ENCODE measurements at regions of chr2 and their contacts with region 1.

Region 1: DNA sequence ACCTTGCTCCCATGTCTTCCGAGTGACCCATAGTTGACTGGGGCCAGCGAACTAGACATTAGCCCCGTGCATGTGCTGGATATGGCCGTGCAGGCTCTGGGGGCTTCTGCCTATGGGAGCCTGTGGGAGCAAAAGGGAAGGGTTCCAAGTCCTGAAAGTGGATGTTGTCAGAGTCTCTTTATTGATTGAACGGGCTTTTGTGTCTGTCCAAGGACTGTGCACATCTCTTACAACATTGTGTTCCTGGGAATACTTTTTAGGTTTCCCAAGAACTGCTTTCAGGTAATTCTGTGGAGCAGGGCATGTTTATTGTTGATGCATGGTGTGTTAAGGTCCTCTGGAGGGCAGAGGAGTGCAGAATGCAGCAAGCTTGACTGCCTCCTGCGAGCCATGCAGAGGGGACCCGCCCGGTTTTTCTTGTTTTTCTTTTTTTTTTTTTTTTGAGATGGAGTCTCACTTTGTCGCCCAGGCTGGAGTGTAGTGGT is 5.0 kb downstream of the RNF144A start:
- DNase-seq: peak; percentile 47
- H3K4me3 ChIP-seq: no peak overlapping the region
- H3K27ac ChIP-seq: no peak overlapping the region
- H3K4me1 ChIP-seq: peaks cover 6 to 76% of the 10 kb centered on the region in 2 experiments; a peak in 3 of 4 replicates
- H3K27me3 ChIP-seq: no peaks in the 10 kb centered on the region
- CTCF ChIP-seq: peak; percentile 21
- EP300 ChIP-seq: no peak
- RAD21 ChIP-seq: peak; percentile 62

Region 2: DNA sequence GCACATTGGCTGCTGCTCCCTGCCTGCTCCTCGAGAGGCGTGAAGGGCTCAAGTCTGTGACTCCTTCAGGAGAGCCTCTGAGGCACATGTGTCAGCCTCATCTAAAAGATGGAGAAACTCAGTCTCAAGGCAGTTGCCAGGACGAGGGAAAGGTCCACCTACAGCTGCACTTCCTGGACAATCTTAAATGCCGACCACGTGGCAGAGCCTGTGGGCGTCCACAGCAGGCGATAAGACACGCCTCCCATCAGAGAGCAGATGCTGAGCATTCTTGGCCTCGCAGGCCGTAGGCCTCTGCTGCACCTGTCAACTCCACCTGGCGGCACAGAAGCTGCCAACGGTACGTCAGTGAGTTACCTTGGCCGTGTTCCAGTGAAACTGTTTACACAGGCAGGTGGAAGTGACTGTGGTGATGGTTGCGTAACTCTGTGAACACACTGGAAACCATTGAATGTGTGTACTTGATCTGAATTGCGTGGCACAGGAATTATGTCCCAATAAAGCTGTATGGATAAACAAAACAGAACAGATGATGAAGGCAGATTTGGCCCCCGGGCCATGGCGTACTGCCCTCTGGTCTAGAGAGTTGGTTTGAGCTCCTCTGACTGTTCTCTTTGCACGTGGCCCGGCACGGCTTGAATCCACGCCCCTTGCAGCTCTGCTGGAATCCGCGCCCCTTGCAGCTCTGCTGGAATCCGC is 109.5 kb after region 1 on chr2:
- CTCF ChIA-PET with region 1: interaction called, 80 read pairs
- POLR2A ChIA-PET with region 1: interaction called, 6 read pairs
- DNase-seq: no peak
- H3K4me3 ChIP-seq: no peak overlapping the region
- H3K27ac ChIP-seq: no peak overlapping the region
- H3K4me1 ChIP-seq: peaks cover 0 to 22% of the 10 kb centered on the region in 2 experiments; a peak in 1 of 4 replicates
- H3K27me3 ChIP-seq: no peaks in the 10 kb centered on the region
- CTCF ChIP-seq: no peak
- EP300 ChIP-seq: no peak
- RAD21 ChIP-seq: no peak

Region 3: GRCh38 chr2:7363906-7364305 is 441.7 kb after region 1 on chr2:
- CTCF ChIA-PET with region 1: no interaction called
- POLR2A ChIA-PET with region 1: no interaction called
- DNase-seq: no peak
- H3K4me3 ChIP-seq: no peak overlapping the region
- H3K27ac ChIP-seq: no peak overlapping the region
- H3K4me1 ChIP-seq: no peaks in the 10 kb centered on the region
- H3K27me3 ChIP-seq: no peaks in the 10 kb centered on the region
- CTCF ChIP-seq: peak; percentile 41
- EP300 ChIP-seq: no peak
- RAD21 ChIP-seq: peak; percentile 56